Naive thymus-derived CD4-positive, alpha-beta T cell (primary cell): ENCODE measurements at regions of chr1 and their contacts with region 1.

Region 1: GRCh38 chr1:111755331-111756123 is at the start of gene DDX20:
- DNase-seq: peak; percentile 92 to 97 (median 95)
- ATAC-seq: peak; percentile 97
- H3K4me3 ChIP-seq: peak within 1 kb of the TSS; percentile 87
- H3K4me3 Mint-ChIP-seq: peak within 1 kb of the TSS; percentile 86 to 100 (median 94)
- H3K27ac ChIP-seq: peak within 1 kb of the TSS; percentile 92
- H3K27ac Mint-ChIP-seq: peak within 1 kb of the TSS; percentile 94 to 100 (median 99)
- H3K4me1 ChIP-seq: peaks cover 4 to 18% of the 10 kb centered on the region in 2 donors
- H3K4me1 Mint-ChIP-seq: peaks cover 24 to 49% (median 39%) of the 10 kb centered on the region in 7 donors
- H3K27me3 ChIP-seq: no peaks in the 10 kb centered on the region
- H3K27me3 Mint-ChIP-seq: peaks cover 0 to 2% (median 0%) of the 10 kb centered on the region in 5 donors
- total RNA-seq, gene DDX20: 12.7 to 27.0 (median 18.7) TPM

Region 2: GRCh38 chr1:110963691-110964399 is 791.7 kb before region 1 on chr1 and contains the start of gene LRIF1:
- CTCF ChIA-PET with region 1: no interaction called
- POLR2A ChIA-PET with region 1: no interaction called
- intact Hi-C with region 1: loop called (anchors 1 to 5 kb)
- DNase-seq: peak; percentile 96 to 100 (median 100)
- ATAC-seq: peak; percentile 98
- H3K4me3 ChIP-seq: peak within 1 kb of the TSS; percentile 90
- H3K4me3 Mint-ChIP-seq: peak within 1 kb of the TSS; percentile 81 to 98 (median 93)
- H3K27ac ChIP-seq: peak within 1 kb of the TSS; percentile 89
- H3K27ac Mint-ChIP-seq: peak within 1 kb of the TSS; percentile 89 to 99 (median 97)
- H3K4me1 ChIP-seq: peaks cover 25% of the 10 kb centered on the region in 2 donors
- H3K4me1 Mint-ChIP-seq: peaks cover 29 to 50% (median 35%) of the 10 kb centered on the region in 7 donors
- H3K27me3 ChIP-seq: peaks cover 0 to under 1% of the 10 kb centered on the region in 2 donors
- H3K27me3 Mint-ChIP-seq: peaks cover 12 to 19% (median 15%) of the 10 kb centered on the region in 5 donors
- total RNA-seq, gene LRIF1: 7.9 to 25.8 (median 17.3) TPM

Region 3: GRCh38 chr1:111227851-111228747 is 527.4 kb before region 1 on chr1:
- CTCF ChIA-PET with region 1: no interaction called
- POLR2A ChIA-PET with region 1: no interaction called
- intact Hi-C with region 1: loop called in 1 of 2 experiments (anchors 5 kb)
- DNase-seq: no peak
- ATAC-seq: no peak
- H3K4me3 ChIP-seq: no peak overlapping the region
- H3K4me3 Mint-ChIP-seq: peak overlapping the region; percentile 57 to 88 (median 75)
- H3K27ac ChIP-seq: peak overlapping the region; percentile 71
- H3K27ac Mint-ChIP-seq: peak overlapping the region; percentile 74 to 99 (median 93)
- H3K4me1 ChIP-seq: peaks cover 58 to 79% of the 10 kb centered on the region in 2 donors
- H3K4me1 Mint-ChIP-seq: peaks cover 50 to 96% (median 92%) of the 10 kb centered on the region in 7 donors
- H3K27me3 ChIP-seq: no peaks in the 10 kb centered on the region
- H3K27me3 Mint-ChIP-seq: no peaks in the 10 kb centered on the region

Region 4: DNA sequence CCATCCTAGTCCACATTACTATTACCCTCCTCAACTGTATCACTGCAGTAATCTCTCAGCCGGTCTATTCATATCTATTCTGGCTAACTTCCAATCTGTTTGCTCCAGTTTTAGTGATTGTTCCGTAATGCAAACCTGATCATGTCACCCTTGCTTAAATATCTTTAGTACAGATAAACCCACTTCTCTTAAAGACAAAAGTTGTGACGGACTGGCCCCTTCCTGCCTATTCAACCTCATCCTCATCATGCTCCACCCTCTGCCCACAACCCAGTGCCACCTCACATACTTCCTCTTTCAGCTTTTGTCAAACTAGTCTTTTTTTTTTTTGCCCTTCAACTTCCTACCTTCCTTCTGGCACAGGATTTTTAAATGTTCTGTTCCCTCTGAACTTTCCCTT is 284.5 kb before region 1 on chr1:
- CTCF ChIA-PET with region 1: interaction called, 3 read pairs
- POLR2A ChIA-PET with region 1: interaction called, 7 read pairs
- intact Hi-C with region 1: loop called in 1 of 2 experiments (anchors 1 kb)
- DNase-seq: peak in 8 of 9 donors; percentile 40 to 89 (median 84)
- ATAC-seq: peak; percentile 96
- H3K4me3 ChIP-seq: peak overlapping the region; percentile 37
- H3K4me3 Mint-ChIP-seq: no peak overlapping the region
- H3K27ac ChIP-seq: peak overlapping the region; percentile 68
- H3K27ac Mint-ChIP-seq: no peak overlapping the region
- H3K4me1 ChIP-seq: peaks cover 45 to 49% of the 10 kb centered on the region in 2 donors
- H3K4me1 Mint-ChIP-seq: peaks cover 10 to 26% (median 15%) of the 10 kb centered on the region in 7 donors
- H3K27me3 ChIP-seq: no peaks in the 10 kb centered on the region
- H3K27me3 Mint-ChIP-seq: no peaks in the 10 kb centered on the region

Region 5: DNA sequence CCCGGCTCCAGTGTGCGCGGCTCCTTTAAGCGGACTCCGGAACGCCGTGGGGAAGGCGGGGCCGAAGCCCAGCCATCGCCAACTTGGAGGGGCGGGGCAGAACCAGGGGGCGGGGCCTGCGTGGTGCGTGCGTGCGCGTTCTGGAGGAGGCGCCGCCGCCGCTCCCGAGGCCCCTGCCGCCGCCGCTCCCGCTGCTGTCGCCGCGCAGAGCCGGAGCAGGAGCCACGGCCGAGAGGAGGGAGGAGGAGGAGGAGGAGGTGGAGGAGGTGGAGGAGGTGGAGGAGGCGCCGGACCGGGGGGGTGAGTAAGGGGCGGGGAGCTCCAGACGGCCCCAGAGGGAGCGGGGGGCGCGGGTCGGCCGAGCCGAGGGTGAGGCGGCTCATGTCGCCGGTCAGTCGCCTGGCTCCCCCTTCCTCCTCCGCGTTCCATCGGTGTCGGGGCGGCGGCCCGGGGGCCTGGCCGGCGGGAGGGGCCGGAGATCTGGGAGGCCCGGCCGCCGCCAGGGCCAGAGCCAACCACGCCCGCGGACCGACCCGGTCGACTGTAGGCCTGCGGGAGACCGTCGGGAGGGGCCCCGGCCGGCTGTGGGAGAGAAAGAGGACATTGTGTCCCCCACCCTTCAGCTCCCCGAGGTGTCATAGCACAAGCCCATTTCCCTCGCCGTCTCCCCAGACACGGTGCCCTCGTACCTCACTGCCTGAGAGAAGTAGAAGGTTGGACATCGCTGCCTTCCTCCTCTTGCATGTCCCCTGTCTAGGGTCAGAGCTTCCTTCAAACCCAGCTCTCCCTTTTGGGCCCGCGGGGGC is 135.7 kb before region 1 on chr1 and contains the start of gene RAP1A:
- CTCF ChIA-PET with region 1: interaction called, 3 read pairs
- POLR2A ChIA-PET with region 1: no interaction called
- intact Hi-C with region 1: loop called (anchors 1 kb)
- DNase-seq: peak; percentile 80 to 95 (median 90)
- ATAC-seq: peak; percentile 93
- H3K4me3 ChIP-seq: peak within 1 kb of the TSS; percentile 88
- H3K4me3 Mint-ChIP-seq: peak within 1 kb of the TSS; percentile 93 to 99 (median 96)
- H3K27ac ChIP-seq: peak within 1 kb of the TSS; percentile 91
- H3K27ac Mint-ChIP-seq: peak within 1 kb of the TSS; percentile 86 to 98 (median 95)
- H3K4me1 ChIP-seq: peaks cover 46 to 64% of the 10 kb centered on the region in 2 donors
- H3K4me1 Mint-ChIP-seq: peaks cover 57 to 82% (median 76%) of the 10 kb centered on the region in 7 donors
- H3K27me3 ChIP-seq: no peaks in the 10 kb centered on the region
- H3K27me3 Mint-ChIP-seq: no peaks in the 10 kb centered on the region
- total RNA-seq, gene RAP1A: 89.8 to 183 (median 107) TPM

Region 6: DNA sequence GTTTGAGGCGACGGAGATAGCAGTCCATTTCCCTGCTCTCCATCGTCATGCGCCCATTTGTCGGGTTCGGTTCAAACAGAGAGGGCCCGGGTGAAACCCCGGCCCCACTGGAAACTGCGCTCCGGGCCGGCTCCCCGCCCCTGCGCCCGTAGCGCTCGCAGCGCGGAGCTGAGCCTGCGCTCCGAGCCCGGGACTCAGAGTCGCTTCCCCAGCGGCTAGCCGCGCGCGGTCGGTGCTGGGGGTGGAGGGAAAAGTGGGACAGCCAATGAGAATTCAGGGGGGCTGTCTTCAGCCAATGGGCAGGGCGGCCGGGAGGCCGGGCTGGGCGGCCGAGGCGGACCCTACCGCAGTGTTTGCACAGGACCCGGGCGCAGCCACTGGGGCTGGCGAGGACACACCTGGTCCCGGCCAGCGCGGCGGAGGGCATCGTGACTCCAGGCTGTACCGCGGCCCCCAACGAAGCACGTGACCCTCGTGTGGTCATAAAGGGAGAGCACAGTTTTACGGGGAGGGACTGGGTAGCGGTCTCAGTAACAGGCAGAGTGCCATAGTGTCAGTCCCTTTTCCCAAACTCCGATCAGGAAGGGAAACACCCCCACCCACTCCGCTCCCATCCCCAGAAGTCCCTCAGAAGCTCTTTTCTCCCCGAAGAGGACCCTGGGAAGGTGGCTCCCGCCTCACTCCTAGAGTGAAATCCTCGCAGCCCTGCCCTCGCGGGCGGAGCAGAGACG is 16.2 kb before region 1 on chr1 and contains the start of gene INKA2:
- CTCF ChIA-PET with region 1: interaction called, 4 read pairs
- POLR2A ChIA-PET with region 1: interaction called, 5 read pairs
- intact Hi-C with region 1: loop called (anchors 1 kb)
- DNase-seq: peak in 7 of 9 donors; percentile 22 to 87 (median 33)
- ATAC-seq: peak; percentile 84
- H3K4me3 ChIP-seq: peak within 1 kb of the TSS; percentile 75
- H3K4me3 Mint-ChIP-seq: peak within 1 kb of the TSS; percentile 82 to 95 (median 88)
- H3K27ac ChIP-seq: no peak within 1 kb of the TSS
- H3K27ac Mint-ChIP-seq: peak within 1 kb of the TSS in 6 of 9 donors; percentile 33 to 71 (median 55)
- H3K4me1 ChIP-seq: peaks cover 8 to 10% of the 10 kb centered on the region in 2 donors
- H3K4me1 Mint-ChIP-seq: peaks cover 15 to 21% (median 16%) of the 10 kb centered on the region in 7 donors
- H3K27me3 ChIP-seq: peaks cover 6 to 17% of the 10 kb centered on the region in 2 donors
- H3K27me3 Mint-ChIP-seq: peaks cover 20 to 46% (median 30%) of the 10 kb centered on the region in 5 donors
- total RNA-seq, gene INKA2: 0.94 to 5.6 (median 2.3) TPM in 3 of 5 experiments, not detected in the others